Endothelial cell of umbilical vein (primary cell): ENCODE measurements at regions of chr16 and their contacts with region 1.

Region 1: GRCh38 chr16:31868691-31869167 is 4.9 kb upstream of the ZNF267 start:
- DNase-seq: peak; percentile 77
- H3K4me3 ChIP-seq: no peak overlapping the region
- H3K27ac ChIP-seq: peak overlapping the region; percentile 56
- H3K4me1 ChIP-seq: peaks cover 24% of the 10 kb centered on the region
- H3K27me3 ChIP-seq: peaks cover 2 to 10% of the 10 kb centered on the region in 2 experiments
- CTCF ChIP-seq: peak; percentile 62 to 63
- POLR2A ChIP-seq: no peak

Region 2: DNA sequence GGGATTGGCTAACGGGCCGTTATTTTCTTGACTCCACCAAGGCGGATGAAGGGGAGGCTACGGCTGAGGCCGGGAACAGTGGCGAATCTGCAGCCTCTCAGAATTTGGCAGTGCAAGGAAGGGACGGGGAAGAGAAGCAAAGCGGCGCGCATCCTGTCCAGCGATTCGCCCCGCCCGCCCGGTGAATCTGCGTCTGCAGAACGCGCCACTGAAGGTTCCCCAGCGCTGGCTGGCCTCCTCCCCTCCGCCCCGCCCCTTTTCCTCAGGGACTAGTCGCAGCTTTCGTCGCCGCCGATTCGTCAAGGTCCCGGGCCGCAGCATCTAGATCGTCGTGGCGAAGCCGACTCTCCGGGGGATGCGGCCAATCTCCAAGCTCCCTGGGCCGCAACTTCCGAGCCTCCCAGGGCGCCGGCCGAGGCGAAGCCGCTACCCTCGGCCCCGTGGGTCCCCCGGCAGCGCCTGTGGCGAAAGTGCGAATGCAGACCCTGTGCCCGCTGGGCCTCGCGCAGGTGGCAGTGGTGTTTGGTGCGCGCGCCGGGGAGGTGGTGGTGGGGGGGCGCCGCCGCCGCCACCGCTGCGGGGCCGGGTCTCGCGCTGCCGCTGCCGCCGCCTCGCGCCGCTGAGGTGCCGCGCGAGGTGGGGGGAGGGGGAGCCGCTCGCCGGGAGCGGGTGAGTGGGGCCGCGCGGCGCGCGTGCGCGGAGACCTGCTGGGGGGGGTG is 911.1 kb before region 1 on chr16 and contains the start of gene SETD1A:
- CTCF ChIA-PET with region 1: interaction called, 29 read pairs
- POLR2A ChIA-PET with region 1: no interaction called
- dilution Hi-C with region 1: no loop called
- intact Hi-C with region 1: no loop called
- DNase-seq: peak; percentile 90
- H3K4me3 ChIP-seq: peak within 1 kb of the TSS; percentile 60 to 71 (median 67)
- H3K27ac ChIP-seq: peak within 1 kb of the TSS; percentile 100
- H3K4me1 ChIP-seq: peaks cover 12% of the 10 kb centered on the region
- H3K27me3 ChIP-seq: no peaks in the 10 kb centered on the region
- CTCF ChIP-seq: no peak
- POLR2A ChIP-seq: no peak
- total RNA-seq, gene SETD1A: 21.3 and 25.6 TPM in 2 replicates

Region 3: DNA sequence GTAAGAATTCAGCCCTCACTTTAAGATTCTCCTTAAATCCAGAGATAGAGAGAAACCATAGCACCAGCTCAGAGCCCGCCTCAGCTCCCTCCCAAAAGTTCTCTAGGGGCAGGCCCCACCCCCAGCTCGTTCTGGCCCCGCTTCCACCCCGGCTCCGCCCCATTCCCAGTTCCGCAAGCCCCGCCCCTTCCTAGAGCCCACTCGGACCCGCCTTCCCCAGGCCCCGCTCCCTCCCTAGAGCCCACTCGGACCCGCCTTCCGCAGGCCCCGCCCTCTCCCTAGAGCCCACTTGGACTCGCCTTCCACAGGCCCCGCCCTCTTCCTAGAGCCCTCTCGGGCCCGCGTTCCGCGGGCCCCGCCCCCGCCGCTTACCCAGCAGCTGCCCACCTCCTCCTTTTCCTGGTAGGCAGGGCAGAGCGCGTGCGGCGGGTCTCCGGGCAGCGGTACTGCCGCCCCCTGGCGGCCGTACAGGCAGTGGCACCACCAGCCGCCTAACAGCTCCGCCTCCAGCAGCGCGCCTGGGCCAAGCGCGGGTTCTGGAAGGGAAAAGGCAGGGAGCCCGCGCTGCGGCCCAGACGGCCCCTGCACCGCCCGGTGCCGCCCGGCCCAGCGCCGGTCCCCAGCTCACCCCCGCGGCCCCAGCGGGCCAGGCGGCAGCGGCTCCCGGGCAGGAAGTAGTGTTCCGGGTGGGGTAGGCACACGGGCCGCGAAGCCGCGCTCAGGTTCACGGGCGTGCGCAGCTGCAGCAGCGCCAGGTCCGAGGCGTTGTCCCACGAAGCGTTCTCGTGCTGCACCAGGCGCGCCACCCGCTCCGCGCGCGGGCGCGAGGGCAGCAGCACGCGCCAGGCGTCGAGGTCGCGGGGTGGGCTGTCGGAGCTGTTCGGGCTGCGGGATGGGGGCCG is 726.4 kb before region 1 on chr16:
- CTCF ChIA-PET with region 1: interaction called, 5 read pairs
- POLR2A ChIA-PET with region 1: no interaction called
- dilution Hi-C with region 1: no loop called
- intact Hi-C with region 1: loop called (anchors 1 kb)
- DNase-seq: peak; percentile 99
- H3K4me3 ChIP-seq: peak overlapping the region in 2 of 3 experiments; percentile 6 to 23
- H3K27ac ChIP-seq: peak overlapping the region; percentile 30
- H3K4me1 ChIP-seq: peaks cover 13% of the 10 kb centered on the region
- H3K27me3 ChIP-seq: peaks cover 5 to 13% of the 10 kb centered on the region in 2 experiments
- CTCF ChIP-seq: peak; percentile 98 to 99
- POLR2A ChIP-seq: peak; percentile 29

Region 4: DNA sequence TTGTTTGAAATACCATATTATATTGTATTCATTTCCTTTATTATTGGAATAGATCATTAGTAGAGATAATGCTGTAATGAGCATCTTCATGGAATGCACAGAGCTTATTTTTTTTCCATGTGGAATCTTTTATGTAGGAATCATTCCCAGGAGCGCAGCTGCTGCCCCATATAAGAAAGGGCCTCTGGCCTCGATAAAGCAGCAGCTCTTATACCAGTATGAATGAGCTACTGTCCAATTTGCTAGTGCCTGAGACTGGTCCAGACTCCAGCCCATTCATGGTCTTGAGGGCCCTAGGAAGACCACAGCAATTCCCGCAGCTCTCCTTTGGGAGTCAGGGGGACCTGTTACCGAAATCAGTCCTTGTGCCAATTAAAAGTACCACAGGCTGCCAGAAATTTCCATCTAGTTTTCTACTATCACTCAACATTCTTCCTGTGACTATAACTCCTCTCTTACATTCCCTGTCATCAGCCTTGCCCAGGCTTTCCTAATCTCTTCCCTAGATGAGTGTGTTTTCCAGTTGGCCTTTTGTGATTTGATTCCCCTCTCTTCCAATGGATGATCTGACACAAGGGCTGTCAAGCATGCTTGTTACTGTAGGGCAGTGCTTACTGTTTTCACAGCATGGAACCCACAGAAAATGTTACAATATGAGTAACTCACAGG is 428.1 kb before region 1 on chr16:
- CTCF ChIA-PET with region 1: interaction called, 3 read pairs
- POLR2A ChIA-PET with region 1: interaction called, 8 read pairs
- dilution Hi-C with region 1: no loop called
- intact Hi-C with region 1: loop called (anchors 5 kb)
- DNase-seq: no peak
- H3K4me3 ChIP-seq: no peak overlapping the region
- H3K27ac ChIP-seq: no peak overlapping the region
- H3K4me1 ChIP-seq: no peaks in the 10 kb centered on the region
- H3K27me3 ChIP-seq: peaks cover 3 to 11% of the 10 kb centered on the region in 2 experiments
- CTCF ChIP-seq: no peak
- POLR2A ChIP-seq: no peak

Region 5: DNA sequence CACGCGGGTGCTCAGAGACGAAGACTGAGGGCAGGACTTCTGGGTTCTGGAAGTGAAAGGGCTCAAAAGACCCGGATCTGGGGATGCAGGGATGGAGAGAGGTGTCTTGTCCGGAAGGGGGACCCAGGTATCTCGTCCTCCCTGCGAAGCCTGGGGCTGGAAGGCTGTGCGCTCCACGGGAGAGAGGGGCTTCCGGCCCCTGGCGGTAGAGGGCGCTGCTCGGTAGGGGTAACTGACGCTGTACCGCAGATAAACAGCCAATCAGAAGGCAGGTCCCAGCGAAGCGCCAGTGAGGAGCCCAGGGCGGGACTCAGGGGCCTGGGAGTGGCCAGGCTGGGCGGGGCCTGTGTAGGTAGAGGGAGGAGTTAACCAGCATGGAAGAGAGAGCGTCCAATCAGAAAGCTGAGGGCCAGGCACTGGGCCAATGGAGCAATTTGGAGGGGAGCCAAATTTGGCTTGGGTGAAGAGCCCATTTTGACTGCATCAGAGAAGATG is 396.0 kb before region 1 on chr16:
- CTCF ChIA-PET with region 1: no interaction called
- POLR2A ChIA-PET with region 1: no interaction called
- dilution Hi-C with region 1: no loop called
- intact Hi-C with region 1: loop called (anchors 5 kb)
- DNase-seq: peak; percentile 81
- H3K4me3 ChIP-seq: peak overlapping the region; percentile 19 to 82 (median 71)
- H3K27ac ChIP-seq: peak overlapping the region; percentile 49
- H3K4me1 ChIP-seq: peaks cover 14% of the 10 kb centered on the region
- H3K27me3 ChIP-seq: no peaks in the 10 kb centered on the region
- CTCF ChIP-seq: peak; percentile 68 to 72
- POLR2A ChIP-seq: peak; percentile 58

Region 6: DNA sequence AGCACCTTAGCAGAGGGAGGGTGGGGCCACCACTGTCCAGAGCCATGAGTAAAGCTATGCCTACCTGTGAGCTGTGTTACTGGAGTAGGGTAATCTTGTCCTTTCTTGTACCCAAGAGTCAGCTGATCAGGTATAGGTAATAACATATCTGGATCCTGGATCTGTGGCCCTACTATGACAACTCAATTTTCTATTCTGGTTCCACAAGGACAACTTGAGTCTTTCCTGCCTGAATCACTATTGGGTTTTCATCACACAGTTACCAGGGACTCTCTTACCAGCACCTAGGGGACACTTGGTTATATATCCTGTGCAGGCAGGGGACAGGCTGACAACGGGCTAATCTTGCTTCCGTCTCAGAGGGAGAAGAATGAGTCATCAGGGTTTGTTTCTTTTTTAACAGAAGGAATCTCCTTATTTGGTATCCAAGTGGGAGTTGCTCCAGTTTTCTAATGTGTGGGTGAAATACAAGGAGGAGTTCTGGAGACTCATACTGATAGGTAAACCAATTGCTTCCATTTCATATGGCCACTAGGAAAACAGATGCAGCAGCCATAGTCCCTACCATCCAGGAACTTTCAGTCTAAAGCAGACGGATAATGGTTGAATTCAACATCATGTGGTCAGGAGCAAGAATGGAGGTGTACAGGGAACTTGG is 11.7 kb after region 1 on chr16:
- CTCF ChIA-PET with region 1: interaction called, 15 read pairs
- POLR2A ChIA-PET with region 1: no interaction called
- dilution Hi-C with region 1: no loop called
- intact Hi-C with region 1: loop called (anchors 1 kb)
- DNase-seq: peak; percentile 66
- H3K4me3 ChIP-seq: no peak overlapping the region
- H3K27ac ChIP-seq: peak overlapping the region; percentile 45
- H3K4me1 ChIP-seq: peaks cover 39% of the 10 kb centered on the region
- H3K27me3 ChIP-seq: no peaks in the 10 kb centered on the region
- CTCF ChIP-seq: no peak
- POLR2A ChIP-seq: no peak